OCI-LY7 (cell line): ENCODE measurements at regions of chr1 and their contacts with region 1.

Region 1: GRCh38 chr1:205430696-205431305 is 8.9 kb upstream of the LEMD1 start:
- DNase-seq: peak; percentile 88
- H3K4me3 ChIP-seq: peak overlapping the region; percentile 60
- H3K27ac ChIP-seq: peak overlapping the region; percentile 37
- H3K4me1 ChIP-seq: peaks cover 34% of the 10 kb centered on the region
- CTCF ChIP-seq: peak; percentile 97

Region 2: GRCh38 chr1:204989266-204990058 is 441.3 kb before region 1 on chr1:
- CTCF ChIA-PET with region 1: no interaction called
- POLR2A ChIA-PET with region 1: no interaction called
- intact Hi-C with region 1: no loop called
- DNase-seq: peak; percentile 65
- H3K4me3 ChIP-seq: no peak overlapping the region
- H3K27ac ChIP-seq: no peak overlapping the region
- H3K4me1 ChIP-seq: no peaks in the 10 kb centered on the region
- CTCF ChIP-seq: peak; percentile 91

Region 3: DNA sequence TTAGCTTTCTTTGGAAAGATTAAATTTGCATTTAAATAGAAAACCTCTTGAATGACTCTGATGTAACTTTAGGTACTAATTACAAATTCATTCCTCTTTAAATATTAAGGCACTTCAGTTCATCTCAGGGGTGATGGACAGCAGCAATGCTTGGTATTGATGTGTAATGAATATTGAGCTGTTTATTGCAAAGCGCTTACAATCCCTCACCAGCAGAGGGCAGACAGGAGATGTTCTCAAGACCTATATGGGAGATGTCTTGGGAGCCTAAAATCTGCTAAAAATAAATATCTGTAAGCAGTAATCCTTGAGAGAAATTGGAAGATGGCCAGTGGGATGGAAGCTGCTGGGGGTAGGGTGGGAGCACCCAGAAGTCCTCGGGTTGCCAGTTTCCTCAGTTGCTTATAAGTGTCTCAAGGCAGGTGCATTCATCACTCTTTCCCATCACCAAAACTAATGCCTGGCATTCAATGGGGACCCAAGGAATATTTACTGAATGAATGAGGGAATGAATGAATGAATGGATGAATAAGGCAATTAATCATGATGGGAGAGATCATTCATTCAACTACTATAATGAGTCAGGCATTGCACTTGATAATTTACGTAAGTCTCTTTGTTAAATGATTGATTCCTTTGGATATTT is 76.4 kb before region 1 on chr1:
- CTCF ChIA-PET with region 1: interaction called, 5 read pairs
- POLR2A ChIA-PET with region 1: interaction called, 6 read pairs
- intact Hi-C with region 1: loop called (anchors 5 kb)
- DNase-seq: peak; percentile 78
- H3K4me3 ChIP-seq: no peak overlapping the region
- H3K27ac ChIP-seq: no peak overlapping the region
- H3K4me1 ChIP-seq: peaks cover 9% of the 10 kb centered on the region
- CTCF ChIP-seq: peak; percentile 96